ENCODE measurements at regions of chr4 and their contacts with region 1.

Region 1: GRCh38 chr4:42519803-42520417 is 122.6 kb downstream of the SHISA3 start:
- DNase-seq: no peak
- H3K4me3 ChIP-seq: no peak overlapping the region
- H3K27ac ChIP-seq: no peak overlapping the region
- H3K4me1 ChIP-seq: peaks cover 25% of the 10 kb centered on the region
- H3K27me3 ChIP-seq: no peaks in the 10 kb centered on the region
- CTCF ChIP-seq: peak; percentile 76

Region 2: GRCh38 chr4:42282081-42282901 is 237.6 kb before region 1 on chr4:
- intact Hi-C with region 1: loop called (anchors 5 kb)
- DNase-seq: peak; percentile 29
- H3K4me3 ChIP-seq: peak overlapping the region; percentile 32
- H3K27ac ChIP-seq: peak overlapping the region; percentile 43
- H3K4me1 ChIP-seq: peaks cover 12% of the 10 kb centered on the region
- H3K27me3 ChIP-seq: no peaks in the 10 kb centered on the region
- CTCF ChIP-seq: peak; percentile 81

Region 3: DNA sequence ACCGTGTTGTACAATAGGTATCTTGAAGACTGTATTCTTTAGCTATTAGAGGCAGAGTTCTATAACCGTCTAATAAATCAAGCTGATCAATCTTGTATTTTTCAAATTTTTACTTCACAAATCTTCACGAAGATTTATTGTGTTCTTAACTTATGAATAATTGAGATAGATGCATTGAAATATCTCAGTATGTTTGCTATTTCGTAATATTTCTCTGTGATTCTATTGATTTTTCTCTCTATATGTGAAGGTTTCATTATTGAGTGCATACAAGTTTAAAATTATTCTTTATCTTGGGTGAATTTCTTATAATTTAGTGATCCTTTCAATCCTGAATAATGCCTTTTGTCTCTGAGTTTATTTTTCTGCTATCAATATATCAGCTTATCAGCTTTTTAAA is 142.4 kb before region 1 on chr4:
- intact Hi-C with region 1: loop called (anchors 5 kb)
- DNase-seq: no peak
- H3K4me3 ChIP-seq: no peak overlapping the region
- H3K27ac ChIP-seq: no peak overlapping the region
- H3K4me1 ChIP-seq: no peaks in the 10 kb centered on the region
- H3K27me3 ChIP-seq: no peaks in the 10 kb centered on the region
- CTCF ChIP-seq: no peak

Measured in left ventricle myocardium inferior (tissue), 1 donor.